Right cardiac atrium (tissue), 5 donors: ENCODE measurements at regions of chr6 and their contacts with region 1.

Region 1: DNA sequence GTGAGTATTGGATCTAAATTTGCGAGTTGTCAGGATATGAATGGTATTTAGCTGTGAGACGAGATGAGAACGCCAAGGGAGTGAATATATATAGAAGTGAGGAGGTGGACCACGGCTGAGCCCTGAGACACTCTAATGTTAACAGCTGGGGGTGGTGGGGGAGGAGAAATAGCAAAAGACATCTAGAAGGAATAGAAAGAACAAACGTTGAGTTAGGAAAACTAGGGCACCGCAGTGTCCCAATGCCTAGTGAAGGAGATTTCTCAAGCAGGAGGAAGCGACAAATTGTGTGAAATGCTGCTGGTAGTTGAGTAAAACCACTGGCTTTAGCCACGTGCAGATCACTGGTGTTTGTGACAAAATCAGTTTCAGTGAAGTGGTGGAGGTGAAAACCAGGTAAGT is 56.9 kb downstream of the CD164 start:
- DNase-seq: no peak
- ATAC-seq: no peak
- H3K4me3 ChIP-seq: no peak overlapping the region
- H3K27ac ChIP-seq: no peak overlapping the region
- H3K4me1 ChIP-seq: no peaks in the 10 kb centered on the region
- H3K27me3 ChIP-seq: no peaks in the 10 kb centered on the region

Region 2: GRCh38 chr6:109059571-109060021 is 265.8 kb before region 1 on chr6:
- intact Hi-C with region 1: no loop called
- DNase-seq: no peak
- ATAC-seq: peak; percentile 75 to 88
- H3K4me3 ChIP-seq: no peak overlapping the region
- H3K27ac ChIP-seq: no peak overlapping the region
- H3K4me1 ChIP-seq: peaks cover 16% of the 10 kb centered on the region
- H3K27me3 ChIP-seq: no peaks in the 10 kb centered on the region

Region 3: GRCh38 chr6:109284675-109285074 is 40.7 kb before region 1 on chr6:
- intact Hi-C with region 1: loop called in 1 of 4 experiments (anchors 5 kb)
- DNase-seq: no peak
- ATAC-seq: no peak
- H3K4me3 ChIP-seq: no peak overlapping the region
- H3K27ac ChIP-seq: no peak overlapping the region
- H3K4me1 ChIP-seq: no peaks in the 10 kb centered on the region
- H3K27me3 ChIP-seq: no peaks in the 10 kb centered on the region